ENCODE measurements at regions of chr11 and their contacts with region 1.

Region 1: GRCh38 chr11:59106363-59107336 is at the start of gene FAM111B:
- DNase-seq: peak; percentile 43
- ATAC-seq: peak; percentile 33
- H3K4me3 Mint-ChIP-seq: peak within 1 kb of the TSS; percentile 94
- H3K27ac Mint-ChIP-seq: peak within 1 kb of the TSS; percentile 84
- H3K4me1 Mint-ChIP-seq: peaks cover 84% of the 10 kb centered on the region
- H3K27me3 Mint-ChIP-seq: no peaks in the 10 kb centered on the region
- CTCF ChIP-seq: no peak
- total RNA-seq, gene FAM111B: 48.0 and 49.1 TPM in 2 replicates

Region 2: DNA sequence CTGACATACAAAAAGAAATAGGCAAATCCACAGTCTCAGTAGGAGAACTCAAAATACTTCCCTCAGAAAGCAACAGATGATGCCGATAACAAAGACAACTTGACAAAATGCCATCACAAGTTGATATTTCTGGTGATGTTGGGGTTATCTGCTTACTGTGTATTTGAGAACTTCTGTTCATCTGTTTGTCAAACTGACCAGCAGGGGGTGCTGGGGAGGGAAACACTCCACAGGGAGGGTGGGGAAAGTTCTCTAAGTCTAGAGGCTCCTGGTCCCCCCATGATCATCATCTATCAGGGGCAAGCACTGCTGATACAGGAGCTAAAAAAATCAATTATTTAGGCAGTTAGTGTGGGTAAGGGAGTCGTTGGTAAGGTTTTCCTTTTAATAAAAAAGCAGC is 148.2 kb before region 1 on chr11:
- CTCF ChIA-PET with region 1: interaction called, 5 read pairs
- POLR2A ChIA-PET with region 1: interaction called, 3 read pairs
- intact Hi-C with region 1: loop called (anchors 1 kb)
- DNase-seq: peak; percentile 42
- ATAC-seq: peak; percentile 82
- H3K4me3 Mint-ChIP-seq: no peak overlapping the region
- H3K27ac Mint-ChIP-seq: no peak overlapping the region
- H3K4me1 Mint-ChIP-seq: peaks cover 2% of the 10 kb centered on the region
- H3K27me3 Mint-ChIP-seq: no peaks in the 10 kb centered on the region
- CTCF ChIP-seq: no peak

Region 3: DNA sequence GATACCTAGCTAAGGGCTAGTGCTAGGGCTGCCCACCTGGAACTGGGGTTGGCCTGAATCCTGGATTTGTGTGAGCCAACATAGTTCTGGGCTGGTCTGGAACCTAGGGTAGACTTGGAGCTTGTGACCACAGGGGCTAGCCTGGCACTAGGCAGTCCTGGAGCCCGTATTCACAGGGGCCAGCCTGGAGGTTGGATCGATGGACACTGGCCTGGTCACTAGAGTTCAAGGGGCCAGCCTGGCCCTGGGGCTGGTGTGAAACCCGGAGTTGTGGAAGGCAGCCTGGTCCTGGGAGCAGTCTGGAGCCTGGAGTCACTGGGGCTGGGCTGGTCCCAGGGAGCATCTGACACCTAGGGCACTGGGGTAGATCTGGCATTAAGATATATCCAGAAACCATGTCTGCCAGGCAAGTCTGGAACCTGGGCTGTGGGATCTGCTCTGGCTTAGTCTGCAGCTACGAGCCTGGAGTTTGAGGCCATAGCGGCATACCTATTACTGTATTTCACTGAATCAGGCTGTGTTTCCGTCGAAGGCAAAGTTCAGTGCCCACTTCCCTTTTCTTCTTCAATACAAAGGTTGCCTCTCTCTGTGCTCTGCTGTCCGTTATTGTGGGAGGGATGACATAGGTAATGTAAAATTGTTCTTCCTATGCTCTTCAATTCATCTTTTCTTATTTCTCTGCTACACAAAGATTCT is 29.6 kb before region 1 on chr11:
- CTCF ChIA-PET with region 1: interaction called, 3 read pairs
- POLR2A ChIA-PET with region 1: interaction called, 11 read pairs
- intact Hi-C with region 1: loop called (anchors 2 kb)
- DNase-seq: no peak
- ATAC-seq: peak; percentile 95
- H3K4me3 Mint-ChIP-seq: peak overlapping the region; percentile 56
- H3K27ac Mint-ChIP-seq: peak overlapping the region; percentile 78
- H3K4me1 Mint-ChIP-seq: peaks cover 59% of the 10 kb centered on the region
- H3K27me3 Mint-ChIP-seq: no peaks in the 10 kb centered on the region
- CTCF ChIP-seq: no peak

Region 4: DNA sequence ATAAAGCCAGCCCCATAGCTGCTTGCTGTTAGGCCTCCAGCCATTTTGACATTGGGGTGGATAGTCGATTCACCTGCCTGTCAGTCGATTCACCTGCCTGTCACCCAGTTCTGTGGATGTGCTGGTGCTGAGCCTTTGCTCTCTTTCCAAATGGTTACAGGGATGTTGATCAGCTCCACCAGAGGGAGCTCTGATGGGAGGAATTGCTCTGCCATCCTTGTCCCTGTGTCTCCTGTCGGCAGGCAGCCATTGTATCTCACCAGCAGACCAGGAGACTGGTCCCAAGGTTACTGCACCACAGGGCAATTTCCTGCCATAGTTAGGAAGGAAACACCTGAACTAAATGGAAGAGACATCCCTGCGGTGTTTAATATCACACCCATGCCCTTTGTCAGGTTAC is 100.0 kb after region 1 on chr11:
- CTCF ChIA-PET with region 1: no interaction called
- POLR2A ChIA-PET with region 1: no interaction called
- intact Hi-C with region 1: no loop called
- DNase-seq: no peak
- ATAC-seq: no peak
- H3K4me3 Mint-ChIP-seq: peak overlapping the region; percentile 98
- H3K27ac Mint-ChIP-seq: peak overlapping the region; percentile 93
- H3K4me1 Mint-ChIP-seq: peaks cover 93% of the 10 kb centered on the region
- H3K27me3 Mint-ChIP-seq: no peaks in the 10 kb centered on the region
- CTCF ChIP-seq: no peak